CD8-positive, alpha-beta T cell (primary cell): ENCODE measurements at regions of chr12 and their contacts with region 1.

Region 1: GRCh38 chr12:13165617-13166041 is 30.9 kb upstream of the EMP1 start:
- DNase-seq: peak in 8 of 9 experiments; percentile 58 to 80 (median 70)
- ATAC-seq: peak; percentile 82
- H3K4me3 ChIP-seq: peak overlapping the region in 1 of 2 experiments; percentile 2
- H3K4me3 Mint-ChIP-seq: peak overlapping the region; percentile 1
- H3K27ac ChIP-seq: no peak overlapping the region
- H3K27ac Mint-ChIP-seq: peak overlapping the region; percentile 49
- H3K4me1 ChIP-seq: peaks cover 16% of the 10 kb centered on the region
- H3K4me1 Mint-ChIP-seq: peaks cover 20% of the 10 kb centered on the region
- H3K27me3 ChIP-seq: no peaks in the 10 kb centered on the region
- H3K27me3 Mint-ChIP-seq: no peaks in the 10 kb centered on the region
- CTCF ChIP-seq: no peak

Region 2: DNA sequence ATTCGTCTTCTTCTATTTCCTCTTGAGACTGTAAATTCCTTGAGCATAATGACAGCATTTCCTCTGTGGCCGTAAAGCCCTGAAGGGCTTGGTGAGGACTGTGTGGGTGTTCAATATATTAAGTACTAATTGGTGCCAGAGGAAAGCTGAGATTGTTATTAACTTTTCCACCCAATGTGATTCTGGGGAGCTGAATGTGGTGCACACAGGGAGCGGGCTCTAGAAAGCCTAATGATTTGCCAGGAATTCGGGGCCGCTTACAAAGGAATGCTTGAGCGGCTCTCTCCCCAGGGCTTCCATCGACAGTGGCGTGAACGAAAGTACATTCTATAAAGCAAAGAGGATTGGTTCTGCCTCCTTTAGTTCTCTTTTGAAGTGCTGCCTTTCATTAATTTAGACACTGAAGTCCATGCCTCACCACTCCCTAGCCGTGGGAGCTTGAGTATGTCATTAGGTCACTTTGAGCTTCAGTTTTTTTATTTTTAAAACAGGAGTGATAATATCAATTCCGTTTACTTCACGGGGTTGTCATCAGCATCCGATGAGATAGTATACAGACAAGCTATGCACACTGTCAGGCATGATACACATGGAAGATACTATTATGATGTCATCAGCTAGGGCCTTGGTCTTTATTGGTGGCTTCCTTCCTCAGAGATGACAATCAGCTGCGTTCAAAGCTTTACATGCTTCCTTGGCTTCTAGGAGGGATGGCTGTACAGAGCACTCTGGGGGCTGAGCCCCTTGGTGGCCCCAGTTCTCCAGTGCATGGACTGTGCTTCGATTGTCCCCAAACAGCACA is 51.2 kb before region 1 on chr12:
- CTCF ChIA-PET with region 1: no interaction called
- POLR2A ChIA-PET with region 1: no interaction called
- intact Hi-C with region 1: no loop called
- DNase-seq: no peak
- ATAC-seq: no peak
- H3K4me3 ChIP-seq: no peak overlapping the region
- H3K4me3 Mint-ChIP-seq: no peak overlapping the region
- H3K27ac ChIP-seq: no peak overlapping the region
- H3K27ac Mint-ChIP-seq: no peak overlapping the region
- H3K4me1 ChIP-seq: no peaks in the 10 kb centered on the region
- H3K4me1 Mint-ChIP-seq: no peaks in the 10 kb centered on the region
- H3K27me3 ChIP-seq: no peaks in the 10 kb centered on the region
- H3K27me3 Mint-ChIP-seq: peaks cover 14% of the 10 kb centered on the region
- CTCF ChIP-seq: no peak

Region 3: GRCh38 chr12:13179211-13180074 is 13.8 kb after region 1 on chr12:
- CTCF ChIA-PET with region 1: no interaction called
- POLR2A ChIA-PET with region 1: interaction called, 3 read pairs
- intact Hi-C with region 1: loop called in 1 of 2 experiments (anchors 1 kb)
- DNase-seq: peak; percentile 12 to 69 (median 56)
- ATAC-seq: peak; percentile 89
- H3K4me3 ChIP-seq: peak overlapping the region; percentile 4 to 38
- H3K4me3 Mint-ChIP-seq: peak overlapping the region; percentile 77
- H3K27ac ChIP-seq: no peak overlapping the region
- H3K27ac Mint-ChIP-seq: peak overlapping the region; percentile 46
- H3K4me1 ChIP-seq: peaks cover 14% of the 10 kb centered on the region
- H3K4me1 Mint-ChIP-seq: peaks cover 19% of the 10 kb centered on the region
- H3K27me3 ChIP-seq: no peaks in the 10 kb centered on the region
- H3K27me3 Mint-ChIP-seq: peaks cover 5% of the 10 kb centered on the region
- CTCF ChIP-seq: no peak

Region 4: DNA sequence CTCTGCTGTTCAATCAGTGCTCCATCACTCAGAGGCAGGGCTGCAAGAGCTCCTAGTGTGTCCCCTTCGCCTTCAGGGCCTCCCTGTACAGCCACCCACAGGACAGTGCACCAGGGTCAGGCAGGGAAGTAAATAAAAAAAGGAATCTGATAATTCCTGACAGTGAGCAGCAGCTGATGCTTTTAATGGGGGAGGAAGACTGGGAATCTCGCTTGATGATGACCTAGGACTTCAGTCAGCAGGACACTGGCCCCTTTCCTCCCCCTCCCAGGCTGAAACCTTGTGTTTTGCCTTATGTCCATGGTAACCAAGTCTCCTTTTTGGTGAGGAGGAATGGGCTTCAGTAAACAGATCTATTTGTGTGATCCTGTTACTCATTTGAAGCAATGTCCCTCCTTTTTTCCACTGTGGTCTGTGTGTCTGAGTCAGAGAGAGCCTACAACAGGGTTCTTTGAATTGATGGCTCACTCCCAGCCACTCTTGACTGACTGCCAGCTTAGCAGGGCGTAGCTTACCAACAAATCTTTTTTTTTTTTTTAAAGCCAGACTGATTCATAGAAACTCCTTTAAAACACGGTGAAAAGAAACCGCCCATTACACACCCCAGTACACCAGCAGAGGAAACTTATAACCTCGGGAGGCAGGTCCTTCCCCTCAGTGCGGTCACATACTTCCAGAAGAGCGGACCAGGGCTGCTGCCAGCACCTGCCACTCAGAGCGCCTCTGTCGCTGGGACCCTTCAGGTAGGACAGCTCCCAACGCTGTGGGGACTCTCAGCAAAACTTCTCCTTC is 30.7 kb after region 1 on chr12 and contains the start of gene EMP1:
- CTCF ChIA-PET with region 1: no interaction called
- POLR2A ChIA-PET with region 1: no interaction called
- intact Hi-C with region 1: loop called in 1 of 2 experiments (anchors 2 kb)
- DNase-seq: peak; percentile 10 to 85 (median 67)
- ATAC-seq: peak; percentile 90
- H3K4me3 ChIP-seq: peak within 1 kb of the TSS; percentile 23 to 44
- H3K4me3 Mint-ChIP-seq: peak within 1 kb of the TSS; percentile 76
- H3K27ac ChIP-seq: no peak within 1 kb of the TSS
- H3K27ac Mint-ChIP-seq: peak within 1 kb of the TSS; percentile 34
- H3K4me1 ChIP-seq: peaks cover 14% of the 10 kb centered on the region
- H3K4me1 Mint-ChIP-seq: peaks cover 18% of the 10 kb centered on the region
- H3K27me3 ChIP-seq: no peaks in the 10 kb centered on the region
- H3K27me3 Mint-ChIP-seq: no peaks in the 10 kb centered on the region
- CTCF ChIP-seq: no peak
- total RNA-seq, gene EMP1: 4.4 to 5.0 TPM